ENCODE measurements at regions of chr3 and their contacts with region 1.

Region 1: GRCh38 chr3:46488735-46489361 is 8.9 kb upstream of the RTP3 start:
- DNase-seq: peak; percentile 87
- H3K4me3 ChIP-seq: no peak overlapping the region
- H3K27ac ChIP-seq: no peak overlapping the region
- H3K4me1 ChIP-seq: no peaks in the 10 kb centered on the region
- H3K27me3 ChIP-seq: no peaks in the 10 kb centered on the region
- CTCF ChIP-seq: peak; percentile 72 to 98 (median 86)
- POLR2A ChIP-seq: no peak

Region 2: DNA sequence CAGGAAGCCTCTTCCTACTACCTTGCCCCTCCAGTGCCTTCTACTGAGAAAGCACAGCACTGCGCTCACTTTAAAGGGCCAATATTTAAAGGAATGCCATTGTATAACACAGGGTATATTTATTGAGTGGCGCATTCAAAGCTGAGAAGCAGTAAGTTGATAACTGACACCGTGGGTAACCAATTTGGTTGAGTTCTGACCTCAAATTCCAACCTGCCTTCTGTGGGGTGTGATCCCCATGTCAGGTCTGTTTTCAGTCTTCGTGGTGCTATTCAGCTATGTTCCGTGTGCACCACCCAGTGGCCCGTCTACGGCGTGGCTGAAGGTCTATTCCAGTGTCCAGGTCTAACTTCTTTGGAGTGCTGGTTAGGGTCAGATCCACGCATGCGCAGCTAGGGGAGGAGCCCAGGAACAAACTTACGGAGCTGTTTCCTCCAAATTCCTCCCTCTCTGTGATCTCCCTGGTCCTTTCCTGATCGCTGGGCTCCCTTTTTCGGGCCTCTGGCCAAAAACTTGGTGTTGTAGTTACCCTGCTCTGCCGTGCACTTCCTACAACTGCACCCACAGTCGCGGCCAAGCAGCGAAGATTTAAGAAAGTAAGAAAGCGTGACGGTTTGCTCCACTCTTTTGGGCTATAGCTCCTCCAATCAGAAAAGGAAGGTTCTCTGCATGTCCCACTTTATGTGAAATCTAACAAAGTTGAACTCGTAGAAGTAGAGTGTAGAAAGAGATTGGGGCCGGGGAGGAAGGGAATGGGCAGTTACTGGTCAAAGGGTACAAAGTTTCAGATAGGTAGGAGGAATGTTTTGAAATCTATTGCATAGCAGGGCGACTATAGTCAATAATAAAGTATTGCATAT is 69.6 kb after region 1 on chr3:
- intact Hi-C with region 1: loop called (anchors 2 kb)
- DNase-seq: peak; percentile 79
- H3K4me3 ChIP-seq: peak overlapping the region; percentile 21 to 28
- H3K27ac ChIP-seq: no peak overlapping the region
- H3K4me1 ChIP-seq: no peaks in the 10 kb centered on the region
- H3K27me3 ChIP-seq: no peaks in the 10 kb centered on the region
- CTCF ChIP-seq: peak in 3 of 4 experiments; percentile 47 to 72 (median 61)
- POLR2A ChIP-seq: no peak

Region 3: GRCh38 chr3:46629551-46630517 is 141.0 kb after region 1 on chr3:
- intact Hi-C with region 1: loop called (anchors 2 kb)
- DNase-seq: peak; percentile 57
- H3K4me3 ChIP-seq: no peak overlapping the region
- H3K27ac ChIP-seq: peak overlapping the region in 1 of 2 donors; percentile 49
- H3K4me1 ChIP-seq: no peaks in the 10 kb centered on the region
- H3K27me3 ChIP-seq: no peaks in the 10 kb centered on the region
- CTCF ChIP-seq: peak; percentile 71 to 96 (median 82)
- POLR2A ChIP-seq: no peak

Measured in prostate gland (tissue), 2 donors.